ENCODE measurements at regions of chr7 and their contacts with region 1.

Region 1: GRCh38 chr7:106041140-106041717 is 70.9 kb downstream of the SYPL1 start:
- DNase-seq: peak; percentile 50
- H3K4me3 ChIP-seq: no peak overlapping the region
- H3K27ac ChIP-seq: no peak overlapping the region
- H3K27me3 ChIP-seq: peaks cover 20% of the 10 kb centered on the region
- CTCF ChIP-seq: peak; percentile 90

Region 2: GRCh38 chr7:105759670-105760550 is 281.3 kb before region 1 on chr7:
- in situ Hi-C with region 1: loop called (anchors 25 kb)
- DNase-seq: peak; percentile 67
- H3K4me3 ChIP-seq: no peak overlapping the region
- H3K27ac ChIP-seq: no peak overlapping the region
- H3K27me3 ChIP-seq: no peaks in the 10 kb centered on the region
- CTCF ChIP-seq: peak; percentile 62